Esophagus muscularis mucosa (tissue), 4 donors: ENCODE measurements at regions of chr21 and their contacts with region 1.

Region 1: DNA sequence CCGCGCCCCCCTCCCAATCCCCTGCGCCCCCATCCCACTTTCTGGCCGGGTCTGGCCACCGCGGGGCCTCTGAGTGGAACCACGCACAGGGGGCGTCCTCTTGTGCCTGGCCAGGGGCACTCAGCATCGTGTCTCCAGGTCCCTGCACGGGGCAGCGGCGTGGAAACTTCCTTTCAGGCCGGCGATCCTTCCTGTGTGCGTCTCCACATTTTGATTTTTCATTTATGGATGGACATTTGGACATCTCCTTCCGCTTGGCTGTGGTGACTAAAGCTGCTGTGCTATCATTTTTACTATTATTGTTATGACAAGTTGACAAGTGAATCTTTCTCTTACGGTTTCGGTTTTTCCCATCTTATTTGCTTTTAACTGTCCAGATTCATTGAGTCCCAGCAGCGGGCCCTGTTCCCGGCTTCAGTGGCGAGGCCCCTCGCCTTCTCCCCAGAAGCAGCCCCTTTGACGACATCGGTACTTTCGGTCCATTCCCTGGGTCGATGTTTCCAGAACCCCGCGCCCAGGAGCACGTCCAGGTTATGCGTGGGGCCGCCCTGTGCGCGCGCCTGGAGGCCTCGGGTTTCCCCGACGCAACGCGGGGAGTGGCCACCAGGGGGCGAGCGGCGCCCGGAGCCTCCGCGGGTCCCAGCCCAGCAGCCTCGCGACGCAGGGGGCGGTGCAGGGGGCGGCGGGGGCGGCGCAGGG is 12.4 kb upstream of the SLC19A1 start:
- DNase-seq: no peak
- H3K4me3 ChIP-seq: peak overlapping the region; percentile 53 to 70 (median 60)
- H3K27ac ChIP-seq: peak overlapping the region; percentile 64 to 71 (median 70)
- H3K4me1 ChIP-seq: peaks cover 3 to 25% (median 19%) of the 10 kb centered on the region in 4 donors
- H3K27me3 ChIP-seq: peaks cover 0 to 27% (median 0%) of the 10 kb centered on the region in 4 donors
- CTCF ChIP-seq: peak; percentile 84 to 89 (median 86)
- EP300 ChIP-seq: no peak
- POLR2A ChIP-seq: no peak

Region 2: DNA sequence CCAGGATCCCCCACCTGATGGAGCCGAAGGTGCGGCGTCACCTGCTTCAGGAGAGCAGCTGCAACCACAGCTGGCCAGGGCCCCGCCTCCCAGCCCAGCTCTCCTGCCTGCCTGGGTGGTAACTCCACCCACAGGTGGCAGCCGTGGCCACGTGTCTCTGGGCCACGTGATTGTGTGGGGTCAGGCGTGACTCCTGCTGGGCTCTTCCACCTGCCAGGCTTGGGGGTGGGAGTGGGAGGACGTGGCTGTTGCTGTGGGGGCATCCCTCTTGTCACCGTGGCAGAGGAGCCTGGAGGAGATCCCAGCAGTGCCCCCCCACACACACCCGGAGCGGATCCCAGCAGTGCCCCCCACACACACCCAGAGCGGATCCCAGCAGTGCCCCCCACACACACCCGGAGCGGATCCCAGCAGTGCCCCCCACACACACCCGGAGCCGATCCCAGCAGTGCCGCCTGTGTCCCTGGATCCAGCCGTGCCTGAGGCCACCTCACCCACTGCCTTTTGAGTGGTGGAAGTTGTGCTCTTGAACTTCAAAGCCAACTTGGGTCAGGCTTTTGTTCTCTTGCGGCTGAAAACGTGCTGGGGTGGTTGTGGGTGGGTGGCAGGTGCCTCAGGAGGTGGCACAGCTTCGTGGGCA is 299.1 kb before region 1 on chr21:
- intact Hi-C with region 1: no loop called
- DNase-seq: peak; percentile 62
- H3K4me3 ChIP-seq: no peak overlapping the region
- H3K27ac ChIP-seq: no peak overlapping the region
- H3K4me1 ChIP-seq: no peaks in the 10 kb centered on the region
- H3K27me3 ChIP-seq: peaks cover 0 to 42% (median 4%) of the 10 kb centered on the region in 4 donors
- CTCF ChIP-seq: no peak
- EP300 ChIP-seq: no peak
- POLR2A ChIP-seq: no peak

Region 3: GRCh38 chr21:45596704-45597318 is 42.2 kb after region 1 on chr21:
- intact Hi-C with region 1: loop called (anchors 1 kb)
- DNase-seq: no peak
- H3K4me3 ChIP-seq: no peak overlapping the region
- H3K27ac ChIP-seq: no peak overlapping the region
- H3K4me1 ChIP-seq: peaks cover 0 to 10% (median 6%) of the 10 kb centered on the region in 4 donors
- H3K27me3 ChIP-seq: peaks cover 0 to 43% (median 0%) of the 10 kb centered on the region in 4 donors
- CTCF ChIP-seq: peak; percentile 79 to 85 (median 82)
- EP300 ChIP-seq: no peak
- POLR2A ChIP-seq: no peak

Region 4: GRCh38 chr21:45632160-45632559 is 77.5 kb after region 1 on chr21:
- intact Hi-C with region 1: no loop called
- DNase-seq: peak; percentile 62
- H3K4me3 ChIP-seq: no peak overlapping the region
- H3K27ac ChIP-seq: no peak overlapping the region
- H3K4me1 ChIP-seq: no peaks in the 10 kb centered on the region
- H3K27me3 ChIP-seq: peaks cover 0 to 19% (median 0%) of the 10 kb centered on the region in 4 donors
- CTCF ChIP-seq: no peak
- EP300 ChIP-seq: no peak
- POLR2A ChIP-seq: no peak

Region 5: GRCh38 chr21:45643021-45643980 is 88.7 kb after region 1 on chr21 and contains the start of gene PCBP3:
- intact Hi-C with region 1: loop called (anchors 5 kb)
- DNase-seq: peak; percentile 99
- H3K4me3 ChIP-seq: peak within 1 kb of the TSS; percentile 59 to 84 (median 64)
- H3K27ac ChIP-seq: peak within 1 kb of the TSS; percentile 58 to 82 (median 80)
- H3K4me1 ChIP-seq: peaks cover 6 to 30% (median 25%) of the 10 kb centered on the region in 4 donors
- H3K27me3 ChIP-seq: peaks cover 0 to 41% (median 5%) of the 10 kb centered on the region in 4 donors
- CTCF ChIP-seq: no peak
- EP300 ChIP-seq: no peak
- POLR2A ChIP-seq: no peak
- total RNA-seq, gene PCBP3: 7.5 to 9.2 (median 8.1) TPM

Region 6: GRCh38 chr21:45820171-45821091 is 265.8 kb after region 1 on chr21:
- intact Hi-C with region 1: loop called (anchors 2 kb)
- DNase-seq: peak; percentile 50
- H3K4me3 ChIP-seq: no peak overlapping the region
- H3K27ac ChIP-seq: no peak overlapping the region
- H3K4me1 ChIP-seq: peaks cover 0 to 8% (median 3%) of the 10 kb centered on the region in 4 donors
- H3K27me3 ChIP-seq: peaks cover 0 to 27% (median 0%) of the 10 kb centered on the region in 4 donors
- CTCF ChIP-seq: peak; percentile 76 to 84 (median 77)
- EP300 ChIP-seq: no peak
- POLR2A ChIP-seq: no peak